Cardiac septum (tissue), 1 donor: ENCODE measurements at regions of chr6 and their contacts with region 1.

Region 1: GRCh38 chr6:17808609-17809008 is 101.9 kb upstream of the NUP153 start:
- DNase-seq: no peak

Region 2: DNA sequence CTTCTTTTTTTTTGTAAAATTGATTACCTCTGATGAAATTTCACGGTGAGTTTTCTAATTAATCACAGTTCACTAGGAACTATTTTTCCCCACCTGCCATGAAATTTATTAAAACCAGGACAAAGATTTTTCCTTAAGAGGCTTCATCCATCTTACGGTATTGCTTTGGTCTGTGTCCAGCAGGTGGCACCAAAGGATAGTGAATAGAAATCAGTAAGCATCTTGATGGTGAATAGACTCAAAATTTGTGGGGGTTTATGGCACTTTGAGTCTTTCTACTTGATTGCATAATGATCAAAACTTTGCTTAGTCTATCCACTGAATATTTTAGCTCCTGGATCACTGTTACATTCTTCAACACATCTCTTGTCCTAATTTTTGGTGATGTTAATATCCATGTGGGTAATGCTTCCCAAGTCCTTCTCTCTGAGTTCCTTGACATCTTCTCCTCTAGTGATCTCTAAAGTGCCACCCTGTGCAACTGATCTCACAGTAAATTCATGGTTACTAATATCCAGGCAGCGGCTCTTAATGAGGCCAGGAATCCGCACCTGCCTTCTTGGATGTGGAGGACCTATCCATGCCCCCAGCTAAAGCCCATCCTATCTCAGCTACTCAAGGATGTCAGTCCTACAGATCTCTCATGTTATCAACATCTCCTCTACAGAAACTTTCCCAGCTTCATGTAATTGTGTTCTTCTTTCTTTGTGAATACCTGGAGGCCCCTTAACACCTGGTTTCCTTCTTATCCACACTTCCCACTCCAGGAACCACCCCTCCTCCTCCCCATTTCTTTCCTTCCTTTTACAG is 652.3 kb before region 1 on chr6:
- intact Hi-C with region 1: loop called (anchors 5 kb)
- DNase-seq: no peak

Region 3: DNA sequence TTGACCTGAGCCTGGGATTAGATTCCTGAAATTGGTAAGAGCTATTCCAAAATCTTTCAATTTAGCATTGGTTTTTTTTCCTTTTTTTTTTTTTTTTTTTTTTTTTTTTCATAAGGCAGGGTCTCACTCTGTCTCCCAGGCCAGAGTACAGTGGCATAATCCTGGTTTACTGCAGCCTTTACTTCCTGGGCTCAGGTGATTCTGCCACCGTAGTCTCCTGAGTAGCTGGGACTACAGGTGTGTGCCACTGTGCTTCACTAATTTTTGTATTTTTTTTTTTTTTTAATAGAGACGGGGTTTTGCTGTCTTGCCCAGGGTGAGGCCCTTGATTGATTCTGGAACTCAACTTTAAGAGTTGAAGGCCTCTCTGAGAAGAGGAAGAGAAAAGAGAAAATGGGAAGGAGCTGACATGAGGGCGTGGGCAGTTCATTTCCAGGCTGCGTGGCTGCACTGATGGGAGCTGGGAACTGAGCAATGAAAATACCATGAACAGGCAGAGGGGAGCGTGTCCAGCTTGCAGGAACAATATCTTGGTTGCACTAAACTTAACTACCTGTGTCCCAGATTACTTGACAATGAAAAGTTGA is 371.3 kb after region 1 on chr6:
- intact Hi-C with region 1: no loop called
- DNase-seq: peak; percentile 78

Region 4: GRCh38 chr6:18264219-18264922 is 455.8 kb after region 1 on chr6 and contains the start of gene DEK:
- intact Hi-C with region 1: no loop called
- DNase-seq: peak; percentile 94
- total RNA-seq, gene DEK: 37.6 TPM